ENCODE measurements at regions of chr6 and their contacts with region 1.

Region 1: DNA sequence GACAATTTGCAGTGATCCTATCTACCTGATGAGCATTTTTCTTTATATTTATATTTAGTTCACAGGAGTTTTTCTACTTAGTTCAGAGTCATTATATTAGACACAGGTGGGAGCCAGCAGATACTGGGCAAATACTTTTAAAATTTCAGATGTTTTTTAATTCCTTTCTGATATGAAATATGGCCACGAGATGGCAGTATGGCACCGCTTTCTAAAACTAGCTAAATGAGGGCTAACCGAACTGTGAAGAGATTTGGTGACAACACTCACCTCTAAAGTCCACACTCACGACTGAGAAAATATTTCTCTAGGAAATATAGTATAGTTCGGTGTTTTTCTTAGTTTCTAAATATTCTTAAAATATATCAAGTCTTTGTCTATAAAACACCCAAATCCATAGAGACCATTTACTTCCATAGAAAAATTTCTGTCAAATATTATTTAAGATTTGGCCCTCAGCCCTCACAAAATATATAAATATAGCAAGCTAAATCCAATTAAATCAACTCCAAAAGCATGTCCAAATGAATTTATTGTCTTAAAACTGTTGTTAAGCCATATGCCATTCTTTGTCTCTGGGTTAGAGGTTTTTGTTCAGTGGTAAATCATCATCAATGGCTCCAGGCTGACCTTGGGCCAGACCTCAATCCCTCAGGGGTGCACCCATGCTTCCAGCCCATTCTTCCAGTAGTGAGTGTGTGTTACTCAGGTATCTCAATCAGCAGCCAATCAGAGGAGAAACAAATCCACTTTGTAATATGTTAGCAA is 63.6 kb downstream of the HUS1B start:
- DNase-seq: no peak
- H3K4me3 ChIP-seq: no peak overlapping the region
- H3K27ac ChIP-seq: no peak overlapping the region
- H3K4me1 ChIP-seq: no peaks in the 10 kb centered on the region
- H3K27me3 ChIP-seq: no peaks in the 10 kb centered on the region
- CTCF ChIP-seq: peak; percentile 34 to 77 (median 68)
- POLR2A ChIP-seq: no peak

Region 2: DNA sequence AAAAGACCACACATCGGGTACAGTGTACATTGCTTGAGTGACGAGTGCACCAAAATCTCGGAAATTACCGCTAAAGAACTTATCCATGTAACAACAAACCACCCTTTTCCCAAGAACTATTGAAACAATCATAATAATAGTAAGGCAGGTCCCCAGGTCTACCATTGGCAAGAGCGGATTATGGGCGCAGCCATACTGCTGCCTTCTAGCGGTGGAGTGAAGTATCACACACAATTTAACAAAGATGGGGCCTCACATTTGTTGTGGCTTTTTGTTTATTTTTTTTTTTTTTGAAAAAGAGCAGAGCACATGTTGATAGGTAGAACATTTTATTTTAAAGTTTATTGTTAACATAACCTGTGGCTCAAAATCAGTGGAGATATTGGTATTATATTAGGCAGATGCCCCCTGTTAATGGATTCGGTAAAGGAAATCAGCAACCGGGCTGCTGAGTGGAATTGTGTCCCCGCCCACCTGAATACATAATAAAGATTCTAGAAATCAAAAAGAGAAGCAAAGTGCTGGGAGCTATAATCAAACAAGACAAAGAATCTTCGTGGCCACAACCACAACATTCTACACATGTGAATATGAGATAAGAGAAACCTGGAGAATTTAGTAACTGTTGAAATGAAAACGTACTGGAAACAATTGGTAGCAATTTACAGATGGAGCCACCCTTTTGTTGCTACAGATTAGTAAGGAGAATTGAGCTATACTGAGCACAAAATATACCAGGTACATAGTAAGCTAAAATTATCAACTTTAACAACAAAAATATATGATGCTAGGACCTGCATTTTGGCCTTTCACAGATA is 193.8 kb after region 1 on chr6:
- intact Hi-C with region 1: loop called (anchors 10 kb)
- DNase-seq: no peak
- H3K4me3 ChIP-seq: no peak overlapping the region
- H3K27ac ChIP-seq: no peak overlapping the region
- H3K4me1 ChIP-seq: no peaks in the 10 kb centered on the region
- H3K27me3 ChIP-seq: peaks cover 0 to 19% (median 0%) of the 10 kb centered on the region in 4 donors
- CTCF ChIP-seq: peak in 5 of 6 experiments; percentile 20 to 50 (median 37)
- POLR2A ChIP-seq: no peak

Region 3: DNA sequence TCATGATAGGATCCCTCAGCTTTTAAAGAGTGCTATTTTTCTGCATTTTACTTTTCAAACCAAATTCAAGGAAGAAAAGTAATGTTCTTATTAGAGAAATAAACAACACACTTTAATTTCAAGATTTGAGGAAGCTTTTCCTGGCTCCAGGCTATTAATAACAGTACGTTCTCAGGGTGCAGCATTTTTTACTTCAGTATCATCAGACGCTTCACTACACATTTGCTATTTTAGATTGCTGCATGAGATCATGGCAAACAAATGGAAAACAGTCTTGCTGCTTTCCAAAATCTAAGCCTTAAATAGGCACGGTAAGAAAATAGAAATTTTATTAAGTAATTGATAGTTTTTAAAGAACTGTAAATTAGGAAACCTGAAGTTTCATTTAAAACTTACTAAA is 353.2 kb after region 1 on chr6:
- intact Hi-C with region 1: no loop called
- DNase-seq: no peak
- H3K4me3 ChIP-seq: no peak overlapping the region
- H3K27ac ChIP-seq: no peak overlapping the region
- H3K4me1 ChIP-seq: peaks cover 0 to 7% (median 0%) of the 10 kb centered on the region in 3 donors
- H3K27me3 ChIP-seq: peaks cover 0 to 11% (median 0%) of the 10 kb centered on the region in 4 donors
- CTCF ChIP-seq: no peak
- POLR2A ChIP-seq: no peak